Naive thymus-derived CD4-positive, alpha-beta T cell (primary cell): ENCODE measurements at regions of chr19 and their contacts with region 1.

Region 1: DNA sequence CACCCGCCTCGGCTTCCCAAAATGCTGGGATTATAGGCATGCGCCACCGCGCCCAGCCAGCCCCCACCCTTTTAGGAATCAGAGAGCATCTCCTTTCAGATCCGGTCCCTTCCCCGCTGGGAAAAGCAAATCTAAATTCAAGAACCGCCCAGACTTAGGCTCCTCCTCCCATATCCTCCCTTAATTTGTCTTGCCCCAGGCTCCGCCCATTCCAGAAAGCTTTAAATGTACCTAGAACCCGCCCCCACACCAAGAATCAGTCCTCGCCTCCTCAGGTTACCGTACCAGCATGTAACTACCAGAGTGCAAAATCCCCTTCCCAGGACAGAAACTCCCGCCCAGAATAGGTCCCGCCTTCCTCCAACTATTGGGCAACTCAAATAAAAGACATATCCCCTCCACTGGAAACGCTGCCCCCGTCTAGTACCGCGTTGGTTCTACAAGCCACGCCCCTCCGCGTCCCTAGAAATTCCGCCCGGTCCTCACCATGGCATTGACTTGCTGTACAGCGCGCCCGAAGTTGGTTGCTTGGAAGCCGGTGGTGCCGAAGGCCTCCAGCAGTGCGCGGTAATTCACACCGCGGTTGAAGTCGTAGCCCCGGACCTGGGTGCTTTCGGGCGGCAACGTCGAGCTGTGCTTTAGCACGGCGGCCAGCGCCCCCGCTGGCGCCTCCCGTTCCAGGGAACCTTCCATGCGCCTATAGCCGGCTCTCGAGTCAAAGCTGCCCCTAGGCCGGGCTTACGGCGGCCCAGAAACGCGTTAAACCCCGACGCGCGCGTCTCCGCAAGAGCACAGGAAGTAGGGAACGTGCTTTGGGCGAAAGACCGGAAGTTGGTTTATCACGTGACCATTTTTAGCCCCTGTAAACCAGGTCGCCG is at the start of gene DHPS:
- DNase-seq: peak; percentile 58 to 95 (median 93)
- ATAC-seq: peak; percentile 85
- H3K4me3 ChIP-seq: peak within 1 kb of the TSS; percentile 100
- H3K4me3 Mint-ChIP-seq: peak within 1 kb of the TSS; percentile 92 to 99 (median 96)
- H3K27ac ChIP-seq: peak within 1 kb of the TSS; percentile 95
- H3K27ac Mint-ChIP-seq: peak within 1 kb of the TSS; percentile 86 to 98 (median 94)
- H3K4me1 ChIP-seq: peaks cover 6 to 19% of the 10 kb centered on the region in 2 donors
- H3K4me1 Mint-ChIP-seq: peaks cover 18 to 34% (median 26%) of the 10 kb centered on the region in 7 donors
- H3K27me3 ChIP-seq: no peaks in the 10 kb centered on the region
- H3K27me3 Mint-ChIP-seq: no peaks in the 10 kb centered on the region
- total RNA-seq, gene DHPS: 125 to 223 (median 174) TPM

Region 2: DNA sequence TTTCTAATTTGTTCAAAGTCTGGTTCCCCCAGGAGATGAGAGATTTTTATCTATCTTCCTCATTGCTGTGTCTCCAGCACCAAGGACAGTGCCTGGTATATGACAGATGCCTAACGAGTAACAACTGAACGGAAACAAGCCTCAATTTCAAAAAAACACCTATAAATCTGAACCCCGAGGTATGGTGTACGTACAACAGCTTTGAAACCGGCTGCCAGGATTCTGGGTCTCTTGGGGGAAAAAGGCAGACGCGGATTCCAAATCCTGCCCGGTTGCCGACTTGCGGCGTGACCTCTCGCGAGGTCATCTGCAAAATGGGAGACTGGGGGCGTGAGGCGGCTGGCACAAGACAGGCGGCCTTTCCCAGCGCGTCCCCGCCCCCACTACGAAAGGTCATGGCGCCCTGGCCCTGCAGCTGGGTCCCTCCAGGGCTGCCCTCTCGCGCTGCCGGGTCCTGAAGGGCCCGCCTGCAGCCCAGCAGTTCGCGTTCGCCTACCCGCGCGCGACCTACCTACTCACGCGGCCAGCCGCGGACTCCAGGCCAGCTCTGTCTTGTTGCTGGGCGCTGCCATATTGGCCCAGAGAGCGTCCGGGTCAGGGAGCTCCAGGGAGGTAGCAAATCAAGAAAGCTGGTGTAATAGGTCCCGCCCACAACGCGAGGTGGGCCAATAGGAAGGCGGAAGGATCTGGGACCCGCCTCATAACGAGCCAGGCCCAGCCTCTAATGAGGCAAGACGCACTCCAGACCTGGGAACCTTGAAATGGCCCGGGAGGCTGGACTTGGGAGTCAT is 1152.6 kb before region 1 on chr19 and contains the start of gene ECSIT:
- CTCF ChIA-PET with region 1: no interaction called
- POLR2A ChIA-PET with region 1: no interaction called
- intact Hi-C with region 1: loop called in 1 of 2 experiments (anchors 10 kb)
- DNase-seq: peak; percentile 78 to 93 (median 89)
- ATAC-seq: peak; percentile 99
- H3K4me3 ChIP-seq: peak within 1 kb of the TSS; percentile 90
- H3K4me3 Mint-ChIP-seq: peak within 1 kb of the TSS; percentile 89 to 99 (median 96)
- H3K27ac ChIP-seq: peak within 1 kb of the TSS; percentile 77
- H3K27ac Mint-ChIP-seq: peak within 1 kb of the TSS; percentile 85 to 96 (median 94)
- H3K4me1 ChIP-seq: peaks cover 8 to 10% of the 10 kb centered on the region in 2 donors
- H3K4me1 Mint-ChIP-seq: peaks cover 12 to 27% (median 21%) of the 10 kb centered on the region in 7 donors
- H3K27me3 ChIP-seq: no peaks in the 10 kb centered on the region
- H3K27me3 Mint-ChIP-seq: no peaks in the 10 kb centered on the region
- total RNA-seq, gene ECSIT: 25.8 to 50.3 (median 32.5) TPM

Region 3: DNA sequence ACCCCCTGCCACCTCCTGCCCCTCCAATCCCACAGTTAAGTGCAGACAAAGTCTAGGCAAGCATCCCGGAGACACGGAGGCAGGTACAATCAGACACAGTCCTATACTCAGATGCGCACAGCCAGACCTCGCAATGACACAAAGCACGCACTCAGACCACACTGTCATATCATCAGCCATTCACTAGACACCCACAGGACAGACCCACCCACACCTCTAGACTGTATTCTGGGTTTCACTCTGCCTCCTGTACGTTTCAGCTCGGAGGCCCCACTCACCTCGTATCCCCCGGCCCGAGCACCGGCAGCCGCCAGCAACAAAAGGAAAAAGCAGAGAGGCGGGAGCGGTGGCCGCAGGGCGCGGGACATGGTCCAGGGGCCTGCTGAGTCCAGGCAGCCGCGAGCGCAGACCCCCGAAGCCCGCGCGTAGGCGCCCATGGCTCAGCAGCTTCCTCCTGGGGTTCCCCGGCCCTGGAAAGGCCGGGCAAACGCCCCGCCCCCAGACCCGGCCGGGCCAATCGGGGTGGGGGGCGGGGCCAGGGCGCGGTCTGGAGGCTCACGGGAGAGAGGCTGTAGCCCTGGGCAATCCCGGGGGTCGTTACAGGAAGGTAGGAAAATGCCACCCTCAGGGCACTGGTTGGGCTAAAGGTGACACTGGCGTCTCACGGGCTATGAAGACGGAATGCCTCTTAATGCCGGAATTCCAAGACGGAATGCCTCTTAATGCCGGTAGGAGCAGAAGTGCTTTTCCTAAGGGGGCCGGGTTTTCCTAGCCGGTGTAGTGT is 14.9 kb before region 1 on chr19 and contains the starts of genes MAN2B1 and WDR83:
- CTCF ChIA-PET with region 1: interaction called, 6 read pairs
- POLR2A ChIA-PET with region 1: interaction called, 13 read pairs
- intact Hi-C with region 1: loop called (anchors 1 kb)
- DNase-seq: peak; percentile 56 to 86 (median 72)
- ATAC-seq: peak; percentile 82
- H3K4me3 ChIP-seq: peak within 1 kb of the TSS; percentile 92
- H3K4me3 Mint-ChIP-seq: peak within 1 kb of the TSS; percentile 90 to 100 (median 98)
- H3K27ac ChIP-seq: peak within 1 kb of the TSS; percentile 99
- H3K27ac Mint-ChIP-seq: peak within 1 kb of the TSS; percentile 77 to 100 (median 91)
- H3K4me1 ChIP-seq: peaks cover 38% of the 10 kb centered on the region in 2 donors
- H3K4me1 Mint-ChIP-seq: peaks cover 22 to 69% (median 45%) of the 10 kb centered on the region in 7 donors
- H3K27me3 ChIP-seq: no peaks in the 10 kb centered on the region
- H3K27me3 Mint-ChIP-seq: no peaks in the 10 kb centered on the region
- total RNA-seq, gene MAN2B1: 105 to 215 (median 138) TPM
- total RNA-seq, gene WDR83: 7.8 to 18.6 (median 14.7) TPM

Region 4: GRCh38 chr19:12696366-12697335 is 15.3 kb after region 1 on chr19 and contains the start of gene FBXW9:
- CTCF ChIA-PET with region 1: no interaction called
- POLR2A ChIA-PET with region 1: interaction called, 19 read pairs
- intact Hi-C with region 1: loop called (anchors 1 kb)
- DNase-seq: peak; percentile 88 to 97 (median 95)
- ATAC-seq: peak; percentile 97
- H3K4me3 ChIP-seq: peak within 1 kb of the TSS; percentile 98
- H3K4me3 Mint-ChIP-seq: peak within 1 kb of the TSS; percentile 86 to 95 (median 91)
- H3K27ac ChIP-seq: peak within 1 kb of the TSS; percentile 82
- H3K27ac Mint-ChIP-seq: peak within 1 kb of the TSS; percentile 90 to 97 (median 97)
- H3K4me1 ChIP-seq: peaks cover 9 to 11% of the 10 kb centered on the region in 2 donors
- H3K4me1 Mint-ChIP-seq: peaks cover 0 to 15% (median 12%) of the 10 kb centered on the region in 7 donors
- H3K27me3 ChIP-seq: no peaks in the 10 kb centered on the region
- H3K27me3 Mint-ChIP-seq: no peaks in the 10 kb centered on the region
- total RNA-seq, gene FBXW9: 2.5 to 8.6 (median 4.3) TPM

Region 5: DNA sequence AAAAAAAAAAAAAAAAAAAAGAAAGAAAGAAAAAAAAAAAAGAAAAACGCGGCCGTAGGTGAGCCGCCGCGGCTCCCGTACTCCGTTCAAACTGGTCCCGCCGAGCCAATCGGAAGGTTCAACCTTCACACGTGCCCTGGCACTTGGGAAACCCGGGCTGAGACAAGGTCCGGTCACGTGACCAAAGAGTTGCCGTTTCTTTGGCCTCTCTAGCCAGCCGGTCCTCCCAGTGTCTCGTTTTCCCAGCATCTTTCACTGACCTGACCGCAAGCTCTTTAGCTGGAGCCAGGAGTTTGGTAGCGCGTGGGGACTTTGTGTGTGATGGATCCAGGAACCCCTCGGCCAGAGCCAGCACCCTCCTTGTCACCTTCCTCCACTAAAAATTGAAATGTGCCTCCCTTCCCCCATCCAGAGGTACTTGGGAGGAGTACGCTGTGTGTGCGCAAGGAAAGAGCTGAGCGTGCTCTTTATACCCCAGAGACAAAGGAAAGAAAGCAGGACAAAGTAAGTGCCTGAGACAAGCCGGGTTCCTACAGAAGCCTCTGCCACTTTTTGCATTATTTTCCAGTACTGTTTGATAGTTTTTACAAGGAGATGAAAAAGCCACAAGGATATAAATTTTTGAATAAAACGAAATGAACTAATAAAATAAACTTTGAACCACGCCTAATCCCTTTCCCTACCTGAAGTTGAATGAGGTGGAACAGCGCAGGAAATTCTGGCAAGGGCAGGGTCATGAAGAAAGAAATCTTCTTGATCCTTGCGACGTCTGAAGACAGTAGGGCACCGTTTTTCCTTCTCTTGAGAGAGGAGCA is 41.5 kb after region 1 on chr19:
- CTCF ChIA-PET with region 1: interaction called, 7 read pairs
- POLR2A ChIA-PET with region 1: interaction called, 4 read pairs
- intact Hi-C with region 1: loop called (anchors 1 to 5 kb)
- DNase-seq: peak; percentile 66 to 97 (median 91)
- ATAC-seq: peak; percentile 96
- H3K4me3 ChIP-seq: peak overlapping the region; percentile 91
- H3K4me3 Mint-ChIP-seq: peak overlapping the region; percentile 86 to 96 (median 93)
- H3K27ac ChIP-seq: peak overlapping the region; percentile 85
- H3K27ac Mint-ChIP-seq: peak overlapping the region; percentile 89 to 97 (median 95)
- H3K4me1 ChIP-seq: peaks cover 11 to 16% of the 10 kb centered on the region in 2 donors
- H3K4me1 Mint-ChIP-seq: peaks cover 20 to 43% (median 38%) of the 10 kb centered on the region in 7 donors
- H3K27me3 ChIP-seq: no peaks in the 10 kb centered on the region
- H3K27me3 Mint-ChIP-seq: peaks cover 0 to 2% (median 0%) of the 10 kb centered on the region in 5 donors

Region 6: DNA sequence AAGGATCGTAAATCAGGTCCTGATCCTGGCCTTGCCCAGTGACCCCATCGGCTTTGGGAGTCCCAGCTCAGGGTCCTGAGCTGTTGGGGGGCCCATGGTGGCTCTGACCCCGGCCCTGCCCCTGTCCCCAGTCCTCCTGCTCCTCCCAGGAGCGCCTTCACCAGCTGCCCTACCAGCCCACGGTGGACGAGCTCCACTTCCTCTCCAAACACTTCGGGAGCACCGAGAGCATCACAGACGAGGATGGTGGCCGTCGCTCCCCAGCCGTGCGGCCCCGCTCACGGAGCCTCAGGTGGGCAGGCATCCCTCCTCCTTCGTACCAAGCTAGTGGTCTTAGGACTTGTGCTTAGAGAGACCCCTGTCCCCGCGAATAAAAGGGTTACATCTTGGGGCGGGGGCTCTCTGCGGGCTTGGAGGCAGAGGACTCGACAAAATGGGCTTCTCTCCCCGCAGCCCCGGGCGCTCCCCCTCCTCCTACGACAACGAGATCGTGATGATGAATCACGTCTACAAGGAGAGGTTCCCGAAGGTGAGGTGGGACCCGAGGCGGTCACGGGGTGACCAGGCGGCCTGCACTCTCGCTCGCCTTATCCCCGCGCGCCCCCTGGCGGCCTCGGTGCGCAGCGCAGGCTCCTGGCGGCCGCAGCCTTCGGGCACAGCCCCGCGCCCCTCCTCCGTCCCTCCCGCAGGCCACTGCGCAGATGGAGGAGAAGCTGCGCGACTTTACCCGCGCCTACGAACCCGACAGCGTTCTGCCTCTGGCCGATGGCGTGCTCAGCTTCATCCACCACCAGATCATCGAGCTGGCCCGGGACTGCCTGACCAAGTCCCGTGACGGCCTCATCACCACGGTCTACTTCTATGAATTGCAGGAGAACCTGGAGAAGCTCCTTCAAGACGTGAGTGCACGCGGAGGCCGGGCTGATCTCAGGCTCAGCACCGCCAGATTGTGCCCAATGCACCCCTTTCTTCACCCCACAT is 166.1 kb after region 1 on chr19:
- CTCF ChIA-PET with region 1: interaction called, 12 read pairs
- POLR2A ChIA-PET with region 1: no interaction called
- intact Hi-C with region 1: loop called in 1 of 2 experiments (anchors 1 kb)
- DNase-seq: peak; percentile 46 to 99 (median 72)
- ATAC-seq: peak; percentile 99
- H3K4me3 ChIP-seq: no peak overlapping the region
- H3K4me3 Mint-ChIP-seq: peak overlapping the region in 9 of 10 donors; percentile 41 to 70 (median 50)
- H3K27ac ChIP-seq: no peak overlapping the region
- H3K27ac Mint-ChIP-seq: peak overlapping the region in 1 of 9 donors; percentile 28
- H3K4me1 ChIP-seq: peaks cover 7 to 9% of the 10 kb centered on the region in 2 donors
- H3K4me1 Mint-ChIP-seq: peaks cover 0 to 4% (median 0%) of the 10 kb centered on the region in 7 donors
- H3K27me3 ChIP-seq: peaks cover 0 to 13% of the 10 kb centered on the region in 2 donors
- H3K27me3 Mint-ChIP-seq: peaks cover 9 to 39% (median 28%) of the 10 kb centered on the region in 5 donors